ENCODE measurements at regions of chr2 and their contacts with region 1.

Region 1: DNA sequence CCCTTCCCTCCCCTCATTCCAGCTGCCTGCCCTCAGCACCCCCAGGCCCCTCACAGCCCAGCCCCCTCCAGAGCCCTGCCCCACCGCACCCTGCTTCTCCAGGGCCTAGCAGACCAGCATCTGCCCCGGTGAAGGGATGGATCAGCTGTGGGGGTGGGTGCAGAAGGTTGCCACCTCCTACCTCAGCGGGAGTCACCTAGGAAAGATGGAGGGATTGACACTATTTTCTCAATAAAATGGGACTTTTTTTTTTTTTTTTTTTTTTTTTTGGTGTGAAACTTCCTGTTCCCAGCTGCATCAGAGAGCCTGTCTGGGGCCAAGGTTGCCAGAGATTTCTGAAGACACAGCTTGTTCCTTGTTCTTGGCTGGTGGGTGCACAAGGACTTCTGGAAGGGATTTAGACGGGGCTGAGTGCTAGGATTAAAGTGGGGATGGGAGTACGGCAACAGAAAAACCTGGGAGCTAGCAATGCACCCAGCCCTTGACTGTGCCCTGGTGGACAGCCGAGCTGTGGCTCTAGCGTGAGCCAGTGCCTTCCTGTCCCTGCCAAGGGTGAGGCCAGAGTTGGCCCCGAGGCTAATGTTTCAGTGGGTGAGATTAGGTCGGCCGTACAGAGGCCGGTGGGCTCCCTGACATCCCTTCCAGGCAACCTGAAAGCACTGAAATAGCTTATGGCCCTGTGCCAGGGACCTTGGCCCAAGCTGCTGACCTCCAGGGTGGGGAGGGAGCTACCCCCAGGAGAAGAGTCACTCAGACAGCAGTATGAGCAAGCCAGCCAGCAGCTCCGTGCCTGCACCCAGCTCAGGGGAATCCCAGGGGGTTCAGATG is 4.6 kb downstream of the B3GNT7 start:
- DNase-seq: no peak
- ATAC-seq: no peak
- H3K4me3 ChIP-seq: no peak overlapping the region
- H3K4me3 Mint-ChIP-seq: no peak overlapping the region
- H3K27ac ChIP-seq: no peak overlapping the region
- H3K27ac Mint-ChIP-seq: no peak overlapping the region
- H3K4me1 ChIP-seq: no peaks in the 10 kb centered on the region
- H3K4me1 Mint-ChIP-seq: peaks cover 8% of the 10 kb centered on the region
- H3K27me3 ChIP-seq: peaks cover 0 to 2% of the 10 kb centered on the region in 2 experiments
- H3K27me3 Mint-ChIP-seq: peaks cover 15% of the 10 kb centered on the region
- CTCF ChIP-seq: no peak

Region 2: DNA sequence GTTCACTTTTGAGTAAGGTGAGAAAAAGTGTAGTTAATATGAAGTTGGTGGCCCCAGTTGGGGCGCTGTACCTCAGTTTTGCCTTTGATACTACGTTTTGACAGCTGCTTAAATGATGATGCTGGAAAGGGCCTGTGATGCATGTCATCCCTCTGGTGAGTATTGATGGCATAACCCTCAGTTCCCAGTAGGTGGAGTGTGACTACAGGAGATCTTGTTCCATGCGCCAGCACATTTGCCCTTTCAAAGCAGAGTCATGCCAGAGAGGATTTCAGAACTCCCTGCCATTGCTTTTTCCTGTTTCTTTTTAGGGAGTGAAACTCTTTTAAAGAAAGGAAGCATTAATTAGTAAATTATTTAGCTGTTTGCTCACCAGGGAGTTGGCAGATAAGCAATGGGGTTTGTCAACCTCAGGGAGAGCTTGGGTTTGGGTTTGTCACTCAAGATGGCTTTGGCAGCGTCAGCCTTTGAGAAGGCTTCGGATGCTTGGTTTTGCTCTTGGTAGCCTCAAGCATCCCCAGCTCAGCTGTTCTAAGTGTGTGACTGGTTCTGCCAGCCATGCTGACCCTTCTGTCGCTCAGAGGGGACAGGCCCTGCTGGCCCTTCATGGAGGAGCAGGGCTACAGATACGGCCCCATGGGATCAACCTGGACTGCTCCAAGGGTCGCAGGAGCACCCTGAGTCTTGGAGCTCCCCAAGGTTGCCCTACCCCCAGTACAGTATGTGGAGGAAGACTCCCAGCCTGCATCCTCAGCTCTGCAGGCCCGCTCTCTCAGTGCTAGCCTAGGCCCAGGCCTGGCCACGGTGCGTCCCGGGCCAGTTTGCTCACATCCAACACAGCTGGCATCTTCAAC is 172.5 kb before region 1 on chr2:
- CTCF ChIA-PET with region 1: interaction called, 3 read pairs
- POLR2A ChIA-PET with region 1: no interaction called
- intact Hi-C with region 1: loop called in 1 of 2 experiments (anchors 2 kb)
- DNase-seq: peak in 8 of 9 experiments; percentile 10 to 73 (median 37)
- ATAC-seq: peak; percentile 89
- H3K4me3 ChIP-seq: no peak overlapping the region
- H3K4me3 Mint-ChIP-seq: no peak overlapping the region
- H3K27ac ChIP-seq: no peak overlapping the region
- H3K27ac Mint-ChIP-seq: no peak overlapping the region
- H3K4me1 ChIP-seq: no peaks in the 10 kb centered on the region
- H3K4me1 Mint-ChIP-seq: no peaks in the 10 kb centered on the region
- H3K27me3 ChIP-seq: no peaks in the 10 kb centered on the region
- H3K27me3 Mint-ChIP-seq: no peaks in the 10 kb centered on the region
- CTCF ChIP-seq: peak; percentile 64